Naive thymus-derived CD4-positive, alpha-beta T cell (primary cell): ENCODE measurements at regions of chr6 and their contacts with region 1.

Region 1: DNA sequence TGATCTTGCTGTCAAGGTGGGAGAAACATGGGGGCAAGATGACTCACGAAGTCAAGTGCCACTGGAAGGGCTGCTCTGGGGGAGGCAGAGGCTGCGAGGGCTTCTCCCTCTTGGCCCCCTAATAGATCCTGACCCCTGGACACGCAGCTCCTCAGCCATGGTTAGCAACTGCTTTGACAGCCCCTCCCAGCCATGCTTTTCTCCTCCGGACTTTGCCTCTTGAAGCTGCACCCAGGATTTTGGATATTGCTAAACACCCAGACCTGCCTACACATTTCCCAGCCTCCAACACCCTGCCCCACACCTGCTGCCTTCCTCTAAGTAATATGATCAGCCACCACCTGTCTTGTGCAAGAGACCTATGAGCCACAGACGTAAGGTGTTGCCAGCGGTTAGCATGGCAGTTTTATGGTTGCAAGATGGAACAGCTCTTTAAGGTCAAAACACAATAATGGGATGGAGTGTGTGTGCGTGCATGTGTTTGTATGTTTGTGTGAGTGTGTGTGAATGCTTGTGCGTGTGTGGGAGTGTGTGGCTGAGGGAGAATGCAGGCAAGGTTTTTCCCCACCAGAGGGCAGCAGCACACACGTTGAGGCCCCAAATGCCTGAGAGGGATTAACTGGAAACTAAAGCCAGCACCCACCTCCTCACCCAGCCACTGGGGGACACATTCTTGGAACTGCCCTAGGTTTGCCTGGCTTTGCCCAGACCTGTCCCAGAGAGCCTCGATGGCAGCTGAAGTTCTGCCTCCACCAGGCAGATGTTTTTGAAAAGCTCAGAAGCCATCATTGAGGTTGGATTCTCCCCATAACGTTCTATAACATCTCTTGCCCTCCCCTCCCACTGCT is 2.5 kb downstream of the IP6K3 start:
- DNase-seq: peak; percentile 47 to 71 (median 65)
- ATAC-seq: peak; percentile 87
- H3K4me3 ChIP-seq: no peak overlapping the region
- H3K4me3 Mint-ChIP-seq: no peak overlapping the region
- H3K27ac ChIP-seq: no peak overlapping the region
- H3K27ac Mint-ChIP-seq: no peak overlapping the region
- H3K4me1 ChIP-seq: no peaks in the 10 kb centered on the region
- H3K4me1 Mint-ChIP-seq: peaks cover 0 to 5% (median 4%) of the 10 kb centered on the region in 7 donors
- H3K27me3 ChIP-seq: no peaks in the 10 kb centered on the region
- H3K27me3 Mint-ChIP-seq: peaks cover 4 to 23% (median 12%) of the 10 kb centered on the region in 5 donors

Region 2: GRCh38 chr6:33723371-33724085 is 20.7 kb before region 1 on chr6:
- CTCF ChIA-PET with region 1: interaction called, 12 read pairs
- POLR2A ChIA-PET with region 1: no interaction called
- intact Hi-C with region 1: no loop called
- DNase-seq: no peak
- ATAC-seq: no peak
- H3K4me3 ChIP-seq: no peak overlapping the region
- H3K4me3 Mint-ChIP-seq: peak overlapping the region in 9 of 10 donors; percentile 59 to 81 (median 75)
- H3K27ac ChIP-seq: no peak overlapping the region
- H3K27ac Mint-ChIP-seq: peak overlapping the region in 8 of 9 donors; percentile 56 to 96 (median 81)
- H3K4me1 ChIP-seq: peaks cover 0 to 18% of the 10 kb centered on the region in 2 donors
- H3K4me1 Mint-ChIP-seq: peaks cover 9 to 37% (median 28%) of the 10 kb centered on the region in 7 donors
- H3K27me3 ChIP-seq: no peaks in the 10 kb centered on the region
- H3K27me3 Mint-ChIP-seq: peaks cover 0 to 46% (median 5%) of the 10 kb centered on the region in 5 donors

Region 3: DNA sequence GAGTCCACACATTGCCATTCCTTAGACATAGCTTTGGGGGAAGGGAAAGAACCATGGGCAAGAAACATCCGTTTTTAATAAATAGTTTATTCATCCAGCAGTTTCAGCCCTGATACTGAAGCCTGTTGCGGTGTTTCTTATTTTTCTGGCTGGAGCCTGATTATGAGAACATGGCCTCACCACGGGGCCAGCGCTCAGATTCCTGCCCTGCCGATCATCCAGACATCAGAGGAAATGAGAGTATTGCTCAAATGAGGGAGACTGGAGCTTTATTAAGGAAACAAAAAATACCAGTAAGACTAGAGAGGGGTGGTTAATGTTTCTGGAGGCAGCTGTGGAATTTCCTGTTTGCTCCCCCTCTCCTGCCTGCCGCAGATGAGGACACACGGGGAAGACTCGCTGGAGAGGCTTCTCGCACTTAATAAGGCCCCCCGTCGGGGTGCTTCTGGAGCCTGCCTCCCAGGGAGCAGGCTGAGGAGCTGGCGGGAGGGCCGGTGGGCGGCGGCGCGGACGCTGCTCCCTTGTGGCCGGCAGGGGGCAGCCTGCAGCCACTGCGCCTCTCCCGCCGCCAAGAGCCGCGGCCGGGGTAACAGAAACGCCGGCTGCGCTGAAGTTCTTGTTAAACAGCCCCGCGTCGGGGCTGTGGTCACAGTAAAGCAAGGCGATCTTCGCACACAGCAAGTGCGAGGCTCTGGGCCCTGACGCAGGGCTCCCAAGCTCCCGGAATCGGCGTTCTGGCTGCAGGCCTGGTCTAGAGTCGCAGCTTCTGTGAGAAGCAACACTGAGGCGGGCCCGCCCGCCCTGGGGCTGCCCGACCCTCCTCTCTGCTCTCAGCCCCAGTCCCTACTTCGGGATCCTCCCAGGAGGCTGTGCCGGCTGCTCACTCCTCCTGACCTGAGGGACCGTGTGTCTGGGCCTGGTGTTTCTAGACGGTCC is 27.2 kb after region 1 on chr6:
- CTCF ChIA-PET with region 1: interaction called, 3 read pairs
- POLR2A ChIA-PET with region 1: no interaction called
- intact Hi-C with region 1: loop called in 1 of 2 experiments (anchors 2 kb)
- DNase-seq: peak; percentile 39 to 72 (median 64)
- ATAC-seq: peak; percentile 85
- H3K4me3 ChIP-seq: no peak overlapping the region
- H3K4me3 Mint-ChIP-seq: no peak overlapping the region
- H3K27ac ChIP-seq: no peak overlapping the region
- H3K27ac Mint-ChIP-seq: peak overlapping the region in 6 of 9 donors; percentile 2 to 89 (median 68)
- H3K4me1 ChIP-seq: no peaks in the 10 kb centered on the region
- H3K4me1 Mint-ChIP-seq: peaks cover 0 to 23% (median 13%) of the 10 kb centered on the region in 7 donors
- H3K27me3 ChIP-seq: no peaks in the 10 kb centered on the region
- H3K27me3 Mint-ChIP-seq: peaks cover 0 to 11% (median 3%) of the 10 kb centered on the region in 5 donors

Region 4: GRCh38 chr6:34027445-34027936 is 283.3 kb after region 1 on chr6:
- CTCF ChIA-PET with region 1: interaction called, 6 read pairs
- POLR2A ChIA-PET with region 1: no interaction called
- intact Hi-C with region 1: loop called in 1 of 2 experiments (anchors 1 kb)
- DNase-seq: peak; percentile 36 to 78 (median 64)
- ATAC-seq: peak; percentile 66
- H3K4me3 ChIP-seq: no peak overlapping the region
- H3K4me3 Mint-ChIP-seq: no peak overlapping the region
- H3K27ac ChIP-seq: no peak overlapping the region
- H3K27ac Mint-ChIP-seq: no peak overlapping the region
- H3K4me1 ChIP-seq: no peaks in the 10 kb centered on the region
- H3K4me1 Mint-ChIP-seq: peaks cover 0 to 4% (median 0%) of the 10 kb centered on the region in 7 donors
- H3K27me3 ChIP-seq: no peaks in the 10 kb centered on the region
- H3K27me3 Mint-ChIP-seq: peaks cover 0 to 4% (median 0%) of the 10 kb centered on the region in 5 donors

Region 5: DNA sequence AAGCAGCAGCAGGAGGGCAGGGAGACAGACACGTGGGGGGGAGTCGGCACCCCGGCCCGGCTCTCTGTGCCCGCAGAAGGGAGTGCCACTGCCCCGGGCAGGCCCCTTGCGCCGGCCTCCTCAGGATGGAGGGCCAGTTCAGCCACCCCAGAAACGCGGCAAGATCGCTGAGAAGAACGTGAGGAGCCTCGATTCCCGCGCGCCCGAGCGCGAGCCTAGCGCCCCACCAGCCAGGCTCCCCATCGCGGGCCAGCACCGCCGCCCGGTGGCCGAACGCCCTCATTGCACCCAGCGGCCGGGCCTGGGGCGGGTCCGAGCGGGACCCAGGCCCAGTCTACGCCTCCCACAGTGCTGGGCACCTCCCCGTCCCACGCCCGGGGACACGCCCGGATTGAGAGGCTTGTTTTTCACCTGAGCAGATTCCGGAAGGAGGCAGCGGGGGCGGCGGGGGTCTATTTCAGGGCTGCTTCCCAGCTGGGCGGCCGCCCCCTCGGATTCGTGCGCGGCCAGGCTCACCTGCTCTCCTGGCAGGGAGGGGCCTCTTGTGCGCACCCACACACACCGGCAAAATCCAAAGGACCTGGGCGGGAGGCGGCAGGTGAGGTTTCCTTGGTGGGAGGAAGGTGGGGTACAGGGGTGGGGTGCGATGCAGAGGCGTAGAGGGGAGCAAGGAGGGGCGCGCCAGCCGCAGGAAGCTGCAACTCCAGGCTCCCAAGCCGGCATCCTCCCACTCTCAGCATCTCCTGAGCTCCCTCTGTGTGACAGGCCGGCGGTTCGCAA is 410.6 kb after region 1 on chr6:
- CTCF ChIA-PET with region 1: no interaction called
- POLR2A ChIA-PET with region 1: no interaction called
- intact Hi-C with region 1: loop called in 1 of 2 experiments (anchors 1 kb)
- DNase-seq: peak; percentile 28 to 80 (median 70)
- ATAC-seq: peak; percentile 91
- H3K4me3 ChIP-seq: peak overlapping the region; percentile 37
- H3K4me3 Mint-ChIP-seq: peak overlapping the region in 8 of 10 donors; percentile 29 to 74 (median 54)
- H3K27ac ChIP-seq: no peak overlapping the region
- H3K27ac Mint-ChIP-seq: no peak overlapping the region
- H3K4me1 ChIP-seq: peaks cover 3 to 9% of the 10 kb centered on the region in 2 donors
- H3K4me1 Mint-ChIP-seq: peaks cover 0 to 10% (median 5%) of the 10 kb centered on the region in 7 donors
- H3K27me3 ChIP-seq: peaks cover 2 to 6% of the 10 kb centered on the region in 2 donors
- H3K27me3 Mint-ChIP-seq: peaks cover 25 to 82% (median 34%) of the 10 kb centered on the region in 5 donors

Region 6: GRCh38 chr6:34638834-34639736 is 894.9 kb after region 1 on chr6:
- CTCF ChIA-PET with region 1: no interaction called
- POLR2A ChIA-PET with region 1: no interaction called
- intact Hi-C with region 1: no loop called
- DNase-seq: no peak
- ATAC-seq: no peak
- H3K4me3 ChIP-seq: no peak overlapping the region
- H3K4me3 Mint-ChIP-seq: no peak overlapping the region
- H3K27ac ChIP-seq: no peak overlapping the region
- H3K27ac Mint-ChIP-seq: peak overlapping the region in 2 of 9 donors; percentile 5 to 39
- H3K4me1 ChIP-seq: no peaks in the 10 kb centered on the region
- H3K4me1 Mint-ChIP-seq: peaks cover 0 to 20% (median 8%) of the 10 kb centered on the region in 7 donors
- H3K27me3 ChIP-seq: no peaks in the 10 kb centered on the region
- H3K27me3 Mint-ChIP-seq: no peaks in the 10 kb centered on the region